ENCODE measurements at regions of chr2 and their contacts with region 1.

Region 1: GRCh38 chr2:42513257-42513918 is 19.6 kb upstream of the KCNG3 start:
- DNase-seq: peak in 1 of 2 experiments; percentile 62
- H3K4me3 ChIP-seq: no peak overlapping the region
- H3K27ac ChIP-seq: no peak overlapping the region
- H3K4me1 ChIP-seq: 0 out of 7 replicates have a peak, but pooled peaks cover 0 to 3% (median 0%) of the 10 kb centered on the region in 4 experiments
- H3K27me3 ChIP-seq: no peaks in the 10 kb centered on the region
- CTCF ChIP-seq: peak in 2 of 3 experiments; percentile 61 to 84; a peak in 3 of 4 replicates
- EP300 ChIP-seq: no peak
- POLR2A ChIP-seq: no peak
- RAD21 ChIP-seq: peak; percentile 79 to 86

Region 2: DNA sequence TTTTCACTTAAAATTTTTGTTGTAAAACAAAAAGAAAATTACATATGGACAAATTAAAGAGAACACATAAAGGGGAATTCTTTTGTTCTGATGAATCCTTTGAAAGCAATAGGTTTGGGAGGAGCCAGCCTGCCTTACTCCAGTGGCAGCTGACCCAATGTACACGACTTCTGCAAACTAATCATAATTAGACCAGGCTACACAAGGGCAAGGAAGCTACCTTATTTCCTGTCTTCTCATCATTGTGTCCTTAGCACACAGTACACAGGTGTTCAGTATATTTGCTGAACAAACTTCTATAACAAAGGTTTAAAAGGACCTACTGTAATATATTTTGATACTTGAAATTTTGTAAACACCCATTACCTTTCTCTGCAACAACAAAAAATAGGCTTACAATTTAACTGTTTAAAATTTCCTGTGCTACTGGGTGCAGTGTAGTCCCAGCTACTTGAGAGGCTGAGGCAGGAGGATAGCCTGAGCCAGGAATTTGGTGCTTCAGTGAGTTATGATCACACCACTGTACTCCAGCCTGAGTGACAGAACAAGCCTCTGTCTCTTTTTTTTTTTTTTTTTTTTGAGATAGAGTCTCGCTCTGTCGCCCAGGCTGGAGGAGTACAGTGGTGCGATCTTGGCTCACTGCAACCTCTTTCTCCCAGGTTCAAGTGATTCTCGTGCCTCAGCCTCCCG is 38.5 kb before region 1 on chr2:
- CTCF ChIA-PET with region 1: no interaction called
- POLR2A ChIA-PET with region 1: no interaction called
- DNase-seq: peak in 1 of 2 experiments; percentile 20
- H3K4me3 ChIP-seq: no peak overlapping the region
- H3K27ac ChIP-seq: no peak overlapping the region
- H3K4me1 ChIP-seq: no peaks in the 10 kb centered on the region; a peak in 1 of 7 replicates
- H3K27me3 ChIP-seq: no peaks in the 10 kb centered on the region
- CTCF ChIP-seq: no peak
- EP300 ChIP-seq: no peak
- POLR2A ChIP-seq: no peak
- RAD21 ChIP-seq: no peak

Region 3: GRCh38 chr2:42494355-42495233 is 18.8 kb before region 1 on chr2:
- CTCF ChIA-PET with region 1: interaction called, 23 read pairs
- POLR2A ChIA-PET with region 1: interaction called, 8 read pairs
- DNase-seq: peak; percentile 88
- H3K4me3 ChIP-seq: peak overlapping the region; percentile 67 to 93 (median 79)
- H3K27ac ChIP-seq: peak overlapping the region; percentile 34; the same call in 1 of the 2 replicates
- H3K4me1 ChIP-seq: peaks cover 3 to 9% (median 6%) of the 10 kb centered on the region in 4 experiments; a peak in 5 of 7 replicates
- H3K27me3 ChIP-seq: no peaks in the 10 kb centered on the region; a peak in 1 of 7 replicates
- CTCF ChIP-seq: peak; percentile 63 to 89 (median 86)
- EP300 ChIP-seq: no peak
- POLR2A ChIP-seq: peak in 1 of 2 experiments; percentile 55; a peak in 1 of 3 replicates
- RAD21 ChIP-seq: peak; percentile 83 to 86

Region 4: DNA sequence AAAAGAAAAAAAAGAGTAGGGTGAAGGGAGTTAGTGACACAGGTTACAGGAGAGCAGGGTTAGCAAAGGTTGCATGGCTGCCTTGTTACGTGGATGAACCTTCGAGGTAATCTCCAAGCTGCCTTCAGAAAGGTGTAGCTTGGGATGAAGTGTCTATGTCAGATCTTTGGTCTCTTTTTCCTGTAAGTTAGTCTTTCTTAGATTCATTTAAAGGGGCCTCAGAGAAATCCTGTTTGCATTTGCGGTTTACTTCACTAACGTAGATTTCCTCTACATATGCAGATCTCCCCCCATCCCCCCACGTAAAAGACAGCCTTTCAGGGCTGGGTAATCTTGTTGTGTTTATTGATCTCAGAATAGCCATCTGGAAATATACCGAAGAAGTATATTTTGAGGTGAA is 138.7 kb after region 1 on chr2:
- CTCF ChIA-PET with region 1: interaction called, 10 read pairs
- POLR2A ChIA-PET with region 1: no interaction called
- DNase-seq: no peak
- H3K4me3 ChIP-seq: peak overlapping the region in 2 of 4 experiments; percentile 1 to 5; a peak in 2 of 8 replicates
- H3K27ac ChIP-seq: no peak overlapping the region
- H3K4me1 ChIP-seq: peaks cover 0 to 11% (median 6%) of the 10 kb centered on the region in 4 experiments; a peak in 5 of 7 replicates
- H3K27me3 ChIP-seq: no peaks in the 10 kb centered on the region
- CTCF ChIP-seq: no peak
- EP300 ChIP-seq: no peak
- POLR2A ChIP-seq: no peak
- RAD21 ChIP-seq: no peak